ENCODE measurements at regions of chr11 and their contacts with region 1.

Region 1: GRCh38 chr11:78339483-78339882 is 78.1 kb downstream of the GAB2 start:
- DNase-seq: no peak
- CTCF ChIP-seq: no peak

Region 2: DNA sequence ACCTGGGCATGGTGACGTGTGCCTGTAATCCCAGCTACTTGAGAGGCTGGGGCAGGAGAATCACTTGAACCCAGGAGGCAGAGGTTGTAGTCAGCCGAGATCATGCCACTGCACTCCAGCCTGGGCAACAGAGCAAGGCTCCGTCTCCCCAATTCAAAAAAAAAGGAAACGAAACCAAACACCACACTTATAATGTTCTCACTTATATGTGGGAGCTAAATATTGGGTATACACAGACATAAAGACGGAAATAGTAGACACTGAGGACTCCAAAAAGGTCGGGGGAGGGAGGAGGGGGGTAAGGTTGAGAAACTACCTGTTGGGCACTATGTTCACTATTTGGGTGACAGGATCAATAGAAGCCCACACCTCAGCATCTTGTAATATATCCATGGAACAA is 16.1 kb before region 1 on chr11:
- CTCF ChIA-PET with region 1: no interaction called
- POLR2A ChIA-PET with region 1: no interaction called
- DNase-seq: no peak
- CTCF ChIP-seq: no peak

Region 3: DNA sequence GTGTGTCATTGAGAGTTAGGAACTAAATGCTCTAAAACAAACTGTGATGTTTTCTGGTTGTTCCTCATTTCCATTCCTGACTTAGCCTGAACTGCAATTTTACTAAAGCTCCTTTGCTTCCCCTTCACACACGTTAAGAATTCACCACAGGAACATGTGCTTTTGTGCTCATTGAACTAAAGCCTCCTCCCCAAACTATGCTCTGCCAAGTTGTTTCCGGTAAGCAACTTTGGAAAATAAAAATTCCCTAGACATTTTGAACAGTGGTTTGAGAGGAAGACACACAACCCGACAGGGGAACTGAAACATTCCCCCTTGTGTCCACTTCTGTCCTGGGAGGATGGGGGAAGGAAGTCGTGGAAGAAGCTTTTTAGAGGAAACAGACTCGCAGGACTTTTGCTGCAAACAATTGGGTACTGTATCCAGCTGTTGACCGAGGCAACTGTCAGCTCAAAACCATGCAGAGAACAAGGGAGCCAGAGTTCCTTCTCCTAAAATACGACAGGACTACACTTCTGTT is 11.2 kb after region 1 on chr11:
- CTCF ChIA-PET with region 1: interaction called, 10 read pairs
- POLR2A ChIA-PET with region 1: interaction called, 5 read pairs
- DNase-seq: no peak
- CTCF ChIP-seq: no peak